ENCODE measurements at regions of chr7 and their contacts with region 1.

Region 1: DNA sequence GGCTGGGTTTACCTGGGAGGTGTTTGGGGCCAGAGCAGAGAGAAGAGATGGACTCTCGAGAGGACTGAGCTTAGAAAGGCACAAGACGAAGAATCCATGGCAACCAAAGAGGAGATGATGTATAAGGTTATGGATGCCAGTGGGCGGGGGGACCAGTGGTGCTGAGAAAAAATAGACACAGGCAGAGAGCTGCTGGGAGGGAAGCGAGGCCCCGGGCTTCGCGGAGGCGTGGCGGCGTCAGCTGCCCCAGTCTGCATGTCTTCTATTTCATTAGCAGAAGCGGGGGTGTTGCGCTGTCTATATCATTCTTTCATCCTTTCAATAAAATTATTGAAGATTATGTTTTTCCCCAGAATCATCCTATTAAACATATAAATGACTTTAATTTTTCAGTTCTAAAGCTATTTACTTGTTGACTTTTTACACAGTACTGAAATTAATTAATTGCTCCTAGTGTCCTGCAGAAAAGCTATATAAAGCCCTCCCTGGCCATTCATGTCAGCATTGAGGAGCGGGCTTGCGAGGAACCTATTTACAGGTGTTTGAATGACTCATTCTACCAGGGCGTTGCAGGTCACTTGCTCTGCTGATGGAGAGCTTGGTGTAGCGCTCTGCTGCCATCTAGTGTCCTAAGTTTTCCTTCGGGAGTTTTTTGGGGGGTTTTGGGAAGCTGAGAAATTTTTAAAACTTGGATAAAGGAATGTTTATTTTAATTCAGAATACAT is 42.9 kb upstream of the BHLHA15 start:
- DNase-seq: no peak
- H3K4me3 ChIP-seq: no peak overlapping the region
- H3K27ac ChIP-seq: no peak overlapping the region
- H3K4me1 ChIP-seq: peaks cover 29% of the 10 kb centered on the region
- H3K27me3 ChIP-seq: no peaks in the 10 kb centered on the region
- CTCF ChIP-seq: peak; percentile 90

Region 2: GRCh38 chr7:98021588-98022351 is 146.6 kb before region 1 on chr7:
- intact Hi-C with region 1: loop called (anchors 5 kb)
- DNase-seq: peak; percentile 71
- H3K4me3 ChIP-seq: no peak overlapping the region
- H3K27ac ChIP-seq: no peak overlapping the region
- H3K4me1 ChIP-seq: no peaks in the 10 kb centered on the region
- H3K27me3 ChIP-seq: peaks cover 42% of the 10 kb centered on the region
- CTCF ChIP-seq: peak; percentile 93

Region 3: GRCh38 chr7:98106647-98107445 is 61.5 kb before region 1 on chr7 and contains the start of gene LMTK2:
- intact Hi-C with region 1: loop called (anchors 5 kb)
- DNase-seq: peak; percentile 95
- H3K4me3 ChIP-seq: peak within 1 kb of the TSS; percentile 100
- H3K27ac ChIP-seq: peak within 1 kb of the TSS; percentile 94
- H3K4me1 ChIP-seq: peaks cover 54% of the 10 kb centered on the region
- H3K27me3 ChIP-seq: no peaks in the 10 kb centered on the region
- CTCF ChIP-seq: peak; percentile 97
- total RNA-seq, gene LMTK2: 26.9 TPM

Region 4: DNA sequence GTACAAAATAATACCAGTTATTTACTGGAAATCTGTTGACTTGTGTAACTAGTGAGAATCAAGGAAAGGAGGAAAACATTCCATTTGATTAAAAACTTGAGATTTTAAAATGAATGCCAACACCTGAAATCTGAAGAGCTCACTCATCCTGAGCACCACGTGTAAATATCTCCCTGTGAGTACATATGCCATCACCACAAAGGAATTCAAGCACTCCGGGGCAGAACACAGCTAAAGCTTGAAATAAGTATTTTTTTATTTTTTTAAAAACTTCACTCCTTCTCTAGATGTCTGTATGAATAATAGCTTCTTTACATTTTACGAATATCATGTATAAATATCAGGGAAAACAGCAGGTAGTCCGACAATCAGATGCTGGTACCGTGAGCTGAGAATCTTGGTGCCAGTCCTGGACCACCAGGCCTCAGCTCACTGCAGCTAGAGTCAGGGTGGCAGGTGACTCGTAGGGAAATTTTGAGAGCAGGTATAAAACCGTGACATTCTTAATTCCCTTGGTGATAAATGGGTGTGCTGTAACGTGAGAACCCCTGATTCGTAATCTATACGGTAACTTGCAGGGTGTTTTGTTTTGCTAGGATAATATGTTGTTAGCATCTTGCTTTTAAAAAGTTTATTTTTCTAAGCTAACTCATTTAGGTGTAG is 49.0 kb before region 1 on chr7:
- intact Hi-C with region 1: no loop called
- DNase-seq: no peak
- H3K4me3 ChIP-seq: peak overlapping the region; percentile 22
- H3K27ac ChIP-seq: peak overlapping the region; percentile 73
- H3K4me1 ChIP-seq: peaks cover 65% of the 10 kb centered on the region
- H3K27me3 ChIP-seq: no peaks in the 10 kb centered on the region
- CTCF ChIP-seq: no peak

Region 5: DNA sequence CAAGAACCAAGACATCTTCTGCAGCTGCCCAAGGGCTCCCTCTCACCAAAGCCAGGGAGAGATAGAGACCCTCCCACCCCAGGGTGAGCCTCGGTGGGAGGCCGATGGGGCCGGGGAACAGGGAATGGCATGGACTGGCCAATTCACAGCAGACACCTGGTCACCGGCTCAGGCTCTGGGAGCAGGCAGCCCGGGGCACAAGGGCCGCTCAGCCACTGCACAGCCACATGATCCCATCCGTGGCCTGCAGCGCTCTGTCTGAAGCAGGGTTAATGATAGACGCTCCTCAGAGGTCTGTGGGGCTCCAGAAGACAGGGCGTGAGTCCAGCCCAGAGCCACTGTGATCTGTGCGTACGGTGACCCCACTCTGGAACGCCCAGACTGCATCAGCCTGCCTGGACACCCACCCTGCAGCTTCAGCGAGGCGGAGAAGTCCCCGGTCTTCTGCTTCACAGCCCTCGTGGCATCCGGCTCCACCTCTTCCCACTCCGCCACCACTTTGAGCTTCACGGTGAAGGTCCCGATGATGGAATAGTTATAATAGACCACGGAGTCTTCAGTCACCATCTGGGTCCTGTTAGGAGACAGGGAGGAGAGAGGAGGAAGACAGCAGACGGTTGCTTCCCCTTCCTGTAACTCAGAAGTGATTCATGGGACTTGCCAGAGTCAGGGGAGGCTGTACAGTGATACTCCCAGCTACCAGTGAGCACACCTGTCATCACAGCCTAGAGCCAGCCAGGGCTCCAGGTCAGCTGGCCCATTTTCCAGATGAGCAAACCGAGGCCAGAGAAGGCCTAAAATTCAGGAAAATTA is 687.5 kb after region 1 on chr7:
- intact Hi-C with region 1: no loop called
- DNase-seq: no peak
- H3K4me3 ChIP-seq: no peak overlapping the region
- H3K27ac ChIP-seq: no peak overlapping the region
- H3K4me1 ChIP-seq: no peaks in the 10 kb centered on the region
- H3K27me3 ChIP-seq: peaks cover 57% of the 10 kb centered on the region
- CTCF ChIP-seq: no peak

Measured in left ventricle myocardium inferior (tissue), 1 donor.